KBM-7 (cell line): ENCODE measurements at regions of chr14 and their contacts with region 1.

Region 1: DNA sequence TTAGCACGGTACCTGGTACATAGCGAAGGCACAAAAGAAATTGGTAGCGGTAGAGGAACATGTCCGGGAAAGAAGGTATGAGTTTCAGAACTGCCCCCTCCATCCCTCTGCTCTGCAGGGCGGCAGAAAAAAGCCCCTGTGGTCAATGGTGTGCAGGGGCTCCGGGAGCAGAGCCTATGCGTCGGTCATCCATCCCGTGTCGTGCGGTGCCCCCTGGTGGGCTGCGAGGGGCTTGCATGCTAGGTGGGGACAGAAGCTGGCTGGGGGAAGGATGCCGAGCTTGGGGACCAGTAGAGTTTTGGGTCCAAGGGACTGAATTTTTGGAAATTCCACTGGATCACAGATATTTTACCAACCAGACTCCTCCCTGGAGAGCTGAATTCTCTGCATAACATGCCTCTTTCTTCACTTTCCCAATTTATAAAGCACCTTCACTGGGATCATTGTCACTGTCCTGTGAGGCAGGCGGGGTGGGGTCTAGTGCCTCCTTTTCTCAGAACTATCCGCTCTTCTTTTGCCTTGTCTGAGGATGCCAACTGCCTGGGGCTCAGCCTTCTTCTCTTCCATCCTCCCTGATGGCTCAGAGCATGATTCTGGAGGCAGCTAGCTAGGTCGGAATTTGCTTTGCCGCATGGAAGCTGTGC is 148.7 kb downstream of the SMOC1 start:
- DNase-seq: peak; percentile 58

Region 2: DNA sequence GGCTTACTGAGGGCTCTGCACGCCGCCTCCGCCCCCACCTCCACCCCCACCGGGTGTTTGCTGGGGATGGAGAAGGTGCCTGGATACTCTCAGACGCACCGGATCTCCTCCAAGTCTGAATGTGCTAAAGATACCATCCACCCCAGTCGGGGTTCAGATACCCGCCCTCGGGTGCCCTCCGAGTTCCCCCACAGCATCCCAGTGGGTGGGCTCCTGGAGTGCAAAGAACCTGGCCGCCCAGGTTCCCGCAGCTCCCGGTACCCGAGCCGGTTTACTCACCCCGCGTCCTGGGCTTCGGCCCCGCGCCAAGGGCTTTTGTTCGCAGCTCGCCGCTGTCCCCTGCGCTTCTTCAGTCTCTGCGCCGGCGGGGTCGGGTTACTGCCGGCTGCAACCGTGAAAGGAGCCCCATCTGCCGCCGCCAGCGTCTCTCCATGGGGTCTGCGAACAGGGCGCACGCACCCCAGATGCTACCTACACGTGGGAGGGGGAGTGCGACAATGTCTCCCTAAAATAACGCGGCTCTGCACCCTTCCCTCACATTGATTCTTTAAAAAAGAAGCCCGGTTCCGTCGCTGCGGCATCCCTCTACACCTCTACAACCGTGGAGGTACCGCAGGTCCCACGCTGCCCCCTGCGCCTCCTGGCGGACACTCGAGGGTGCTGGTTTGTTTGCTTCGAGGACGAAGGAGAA is 453.5 kb before region 1 on chr14 and contains the start of gene CCDC177:
- in situ Hi-C with region 1: loop called (anchors 10 kb)
- DNase-seq: peak; percentile 40

Region 3: DNA sequence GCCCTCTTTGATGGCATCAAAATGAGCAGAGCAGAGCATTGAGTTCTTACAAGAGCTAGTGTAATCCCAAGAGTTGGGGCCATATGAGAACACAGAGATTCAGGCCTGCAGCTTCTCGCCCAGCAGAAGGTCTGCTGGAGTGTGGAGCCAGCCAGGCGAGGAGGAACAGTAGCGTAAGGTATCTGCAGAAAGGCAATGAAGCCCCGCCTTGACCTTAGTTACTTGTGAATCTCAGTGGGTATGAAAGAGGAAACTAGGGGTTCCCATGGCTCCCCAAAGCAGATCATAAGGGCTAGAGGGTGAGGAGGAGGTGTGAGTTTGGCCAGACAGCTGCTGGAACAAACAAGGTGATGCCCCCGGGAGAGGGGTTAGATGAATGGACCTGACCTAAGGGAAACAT is 111.5 kb after region 1 on chr14:
- in situ Hi-C with region 1: no loop called
- DNase-seq: no peak